Psoas muscle (tissue), 8 donors: ENCODE measurements at regions of chr19 and their contacts with region 1.

Region 1: GRCh38 chr19:3163230-3163886 is 15.2 kb upstream of the S1PR4 start:
- DNase-seq: peak in 1 of 2 donors; percentile 76
- ATAC-seq: peak; percentile 78 to 92 (median 85)
- H3K4me3 ChIP-seq: no peak overlapping the region
- H3K27ac ChIP-seq: no peak overlapping the region
- H3K4me1 ChIP-seq: no peaks in the 10 kb centered on the region
- H3K27me3 ChIP-seq: peaks cover 0 to 11% (median 0%) of the 10 kb centered on the region in 3 donors
- CTCF ChIP-seq: peak; percentile 91

Region 2: DNA sequence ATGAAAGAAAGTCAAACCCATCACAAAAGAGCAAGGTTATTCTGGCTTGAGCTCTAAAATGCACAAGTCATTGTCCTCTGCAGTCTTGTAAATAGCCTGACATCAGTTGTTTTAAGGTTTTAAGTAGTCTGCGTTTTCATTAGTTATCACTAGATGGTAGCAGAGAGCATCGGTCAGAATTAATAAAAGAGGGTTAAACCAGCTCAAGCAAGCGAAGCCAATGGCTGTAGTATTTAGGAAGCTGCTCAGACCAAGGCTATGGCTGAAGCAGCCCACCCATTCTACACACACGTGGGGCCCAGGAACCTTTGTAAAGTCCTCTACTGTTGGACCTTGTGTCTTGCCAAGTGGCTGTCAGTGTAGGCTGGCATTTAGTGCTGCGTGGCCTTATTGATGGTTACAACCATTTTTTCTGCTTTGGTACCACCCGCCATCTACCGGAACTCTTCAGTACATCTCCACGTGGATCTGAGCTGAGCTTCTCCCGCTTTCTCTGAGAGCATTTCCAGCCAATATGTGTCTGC is 275.9 kb before region 1 on chr19:
- intact Hi-C with region 1: loop called (anchors 2 to 5 kb)
- DNase-seq: no peak
- ATAC-seq: peak in 3 of 4 donors; percentile 45 to 73 (median 61)
- H3K4me3 ChIP-seq: no peak overlapping the region
- H3K27ac ChIP-seq: no peak overlapping the region
- H3K4me1 ChIP-seq: no peaks in the 10 kb centered on the region
- H3K27me3 ChIP-seq: peaks cover 0 to 7% (median 0%) of the 10 kb centered on the region in 3 donors
- CTCF ChIP-seq: peak; percentile 55

Region 3: DNA sequence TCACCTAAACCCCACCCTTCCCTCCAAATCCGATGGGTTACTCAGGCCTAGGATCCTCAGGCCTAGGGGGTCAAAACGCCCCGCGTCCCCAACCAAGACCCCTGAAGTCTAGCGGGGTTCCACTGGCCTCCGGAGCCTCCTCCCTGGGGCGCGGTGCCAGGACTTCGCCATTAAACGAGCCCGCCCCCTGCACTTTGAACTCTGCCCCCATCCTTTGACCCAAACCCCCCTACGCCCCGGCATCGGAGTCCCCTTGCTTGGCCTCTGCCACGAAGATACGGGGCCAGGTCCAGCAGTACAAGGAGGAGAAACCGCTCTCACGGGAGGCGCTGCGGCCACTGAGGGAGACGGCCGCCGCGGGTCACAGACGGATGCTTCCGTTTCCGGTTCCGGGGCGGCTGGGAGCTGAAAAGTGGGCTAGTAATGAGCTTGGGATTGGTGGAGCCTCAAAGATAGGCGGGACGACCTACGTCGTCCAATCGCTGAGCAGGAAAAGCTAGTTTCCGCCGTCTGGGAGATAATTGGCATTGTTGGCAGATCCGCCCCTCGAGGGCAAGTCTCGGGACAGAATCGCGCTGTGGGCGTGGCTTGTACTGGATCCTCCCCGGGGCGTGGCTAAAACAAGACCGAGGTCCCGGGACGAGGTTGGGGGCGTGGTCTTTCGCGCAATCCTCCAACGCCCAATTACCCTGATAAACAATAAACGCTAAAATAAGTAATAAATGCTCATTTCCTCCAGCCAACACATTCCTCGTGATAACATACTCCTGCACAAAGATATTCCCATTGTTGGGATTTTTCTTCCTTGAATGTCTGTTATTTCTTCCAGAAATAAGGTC is 212.9 kb before region 1 on chr19:
- intact Hi-C with region 1: loop called (anchors 5 kb)
- DNase-seq: peak; percentile 100
- ATAC-seq: peak; percentile 97 to 98 (median 97)
- H3K4me3 ChIP-seq: peak overlapping the region; percentile 79
- H3K27ac ChIP-seq: peak overlapping the region; percentile 91
- H3K4me1 ChIP-seq: peaks cover 13% of the 10 kb centered on the region
- H3K27me3 ChIP-seq: no peaks in the 10 kb centered on the region
- CTCF ChIP-seq: no peak

Region 4: DNA sequence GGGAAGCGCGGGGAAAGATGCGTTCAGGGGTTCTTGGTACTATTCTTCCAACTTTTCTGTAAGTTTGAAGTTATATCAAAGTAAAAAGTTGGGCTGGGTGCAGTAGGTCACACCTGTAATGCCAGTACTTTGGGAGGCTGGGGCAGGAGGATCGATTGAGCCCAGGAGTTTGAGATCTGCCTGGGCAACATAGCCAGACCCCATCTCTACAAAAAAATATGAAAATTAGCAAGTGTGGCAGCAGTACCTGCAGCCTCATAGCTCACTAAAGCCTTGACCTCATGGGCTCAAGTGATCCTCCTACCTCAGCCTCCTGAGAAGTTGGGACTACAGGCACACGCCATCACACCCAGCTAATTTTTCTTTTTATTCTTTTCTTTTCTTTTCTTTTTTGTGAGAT is 206.2 kb before region 1 on chr19:
- intact Hi-C with region 1: loop called (anchors 5 kb)
- DNase-seq: no peak
- ATAC-seq: no peak
- H3K4me3 ChIP-seq: no peak overlapping the region
- H3K27ac ChIP-seq: no peak overlapping the region
- H3K4me1 ChIP-seq: no peaks in the 10 kb centered on the region
- H3K27me3 ChIP-seq: no peaks in the 10 kb centered on the region
- CTCF ChIP-seq: no peak

Region 5: DNA sequence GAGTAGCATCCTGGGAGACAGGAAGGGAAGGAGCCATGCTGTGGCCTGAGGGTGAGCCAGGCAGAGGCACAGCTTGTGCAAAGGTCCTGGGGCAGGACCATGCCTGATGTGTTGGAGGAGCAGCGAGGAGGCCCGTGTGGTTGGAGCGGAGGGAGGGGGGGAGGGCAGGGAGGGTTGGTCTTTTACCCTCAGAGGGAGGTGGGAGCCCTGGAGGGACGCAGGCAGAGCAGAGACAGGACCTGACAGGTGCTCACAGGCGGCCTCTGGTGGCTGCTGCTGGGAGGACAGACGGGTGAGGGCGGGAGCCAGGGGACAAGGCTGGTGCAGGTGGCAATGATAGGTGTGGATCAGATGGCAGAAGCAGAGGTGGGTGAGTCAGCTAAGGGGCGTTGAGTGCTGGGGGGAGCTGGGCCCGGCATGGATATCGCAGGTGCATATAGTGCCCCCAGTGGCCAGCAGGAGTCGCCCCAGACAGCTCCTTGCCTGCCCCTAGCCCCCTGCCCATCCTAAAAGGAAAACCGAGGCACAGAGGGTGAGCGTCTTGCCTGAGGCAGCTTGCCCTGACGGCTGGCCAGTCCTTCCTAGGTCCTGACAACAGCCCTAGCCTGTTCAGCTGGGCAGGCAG is 37.3 kb before region 1 on chr19:
- intact Hi-C with region 1: loop called in 1 of 2 experiments (anchors 5 kb)
- DNase-seq: peak; percentile 63 to 83
- ATAC-seq: peak; percentile 77 to 83 (median 80)
- H3K4me3 ChIP-seq: no peak overlapping the region
- H3K27ac ChIP-seq: no peak overlapping the region
- H3K4me1 ChIP-seq: no peaks in the 10 kb centered on the region
- H3K27me3 ChIP-seq: no peaks in the 10 kb centered on the region
- CTCF ChIP-seq: peak; percentile 68